Heart left ventricle (tissue), 16 donors: ENCODE measurements at regions of chr5 and their contacts with region 1.

Region 1: DNA sequence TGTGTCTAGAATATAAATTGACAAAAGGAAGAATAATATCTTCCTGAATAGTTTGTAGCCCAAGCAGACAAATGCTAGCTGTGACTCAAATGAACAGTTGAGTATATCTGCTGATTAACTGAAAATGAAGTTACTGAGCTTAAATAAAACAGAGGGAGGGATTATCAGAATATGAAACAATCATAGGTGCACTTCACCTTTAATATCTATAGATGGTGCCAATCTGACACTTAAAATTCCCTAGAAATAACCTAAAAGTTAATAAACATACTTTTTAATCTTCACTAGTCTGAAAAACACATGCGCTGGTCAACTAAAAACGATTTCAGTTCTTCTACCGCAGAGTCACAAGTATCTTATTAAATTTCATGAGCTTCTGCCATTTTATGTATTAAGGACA is 280.8 kb upstream of the RASA1 start:
- DNase-seq: no peak
- ATAC-seq: no peak
- H3K4me3 ChIP-seq: no peak overlapping the region
- H3K27ac ChIP-seq: no peak overlapping the region
- H3K4me1 ChIP-seq: no peaks in the 10 kb centered on the region
- H3K27me3 ChIP-seq: no peaks in the 10 kb centered on the region
- CTCF ChIP-seq: no peak
- POLR2A ChIP-seq: no peak

Region 2: DNA sequence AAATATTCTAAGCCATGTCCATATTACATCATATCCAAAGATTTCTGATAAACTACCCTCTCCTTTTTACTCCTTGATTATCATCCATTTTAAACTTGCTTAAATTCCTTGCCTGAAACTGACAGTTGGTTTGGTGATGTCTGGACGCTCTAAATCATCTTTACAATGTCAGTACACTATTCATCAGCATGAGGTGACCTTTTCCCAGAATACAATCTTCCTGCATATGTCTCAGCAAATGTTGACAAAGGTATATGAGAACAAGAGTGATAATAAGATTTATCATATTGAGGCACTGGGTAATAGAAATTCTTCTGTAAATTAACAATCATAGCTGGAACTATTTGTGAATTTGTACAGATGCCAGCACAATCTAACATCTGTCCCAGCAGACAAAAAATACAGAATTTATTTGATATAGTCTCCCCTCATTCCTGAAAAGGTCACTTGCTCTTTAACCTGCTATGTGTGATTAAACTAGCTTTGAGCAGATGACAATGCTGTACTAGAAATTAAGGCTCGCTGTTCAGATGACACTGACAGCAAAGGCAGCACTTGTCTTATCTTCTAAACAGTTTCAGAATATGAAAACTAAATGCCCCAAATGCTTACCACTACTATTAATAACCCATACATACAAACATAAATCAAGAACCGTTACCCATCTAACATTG is 336.9 kb before region 1 on chr5:
- intact Hi-C with region 1: no loop called
- DNase-seq: no peak
- ATAC-seq: no peak
- H3K4me3 ChIP-seq: no peak overlapping the region
- H3K27ac ChIP-seq: no peak overlapping the region
- H3K4me1 ChIP-seq: no peaks in the 10 kb centered on the region
- H3K27me3 ChIP-seq: no peaks in the 10 kb centered on the region
- CTCF ChIP-seq: no peak
- POLR2A ChIP-seq: no peak

Region 3: DNA sequence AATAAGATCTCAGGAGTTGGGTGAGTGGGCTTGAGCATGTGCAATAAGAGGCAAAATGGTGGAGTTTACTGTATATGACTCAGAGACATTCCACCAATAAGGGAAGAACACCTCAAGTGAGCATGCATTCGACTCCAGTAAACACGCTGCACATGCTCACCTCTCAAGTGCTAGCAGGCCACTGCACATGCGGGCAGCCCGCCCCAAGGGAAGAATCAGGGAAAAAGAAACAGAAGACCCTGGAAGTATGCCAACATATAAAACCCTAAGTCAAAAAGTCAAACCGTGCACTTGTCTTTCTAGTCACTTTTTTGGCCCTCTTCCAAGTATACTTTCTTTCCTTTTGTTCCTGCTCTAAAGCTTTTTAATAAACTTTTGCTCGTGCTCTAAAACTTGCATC is 35.6 kb after region 1 on chr5:
- intact Hi-C with region 1: loop called in 1 of 10 experiments (anchors 2 kb)
- DNase-seq: no peak
- ATAC-seq: no peak
- H3K4me3 ChIP-seq: no peak overlapping the region
- H3K27ac ChIP-seq: no peak overlapping the region
- H3K4me1 ChIP-seq: peaks cover 0 to 18% (median 8%) of the 10 kb centered on the region in 12 donors
- H3K27me3 ChIP-seq: no peaks in the 10 kb centered on the region
- CTCF ChIP-seq: no peak
- POLR2A ChIP-seq: no peak